Ascending aorta (tissue), 2 donors: ENCODE measurements at regions of chr15 and their contacts with region 1.

Region 1: DNA sequence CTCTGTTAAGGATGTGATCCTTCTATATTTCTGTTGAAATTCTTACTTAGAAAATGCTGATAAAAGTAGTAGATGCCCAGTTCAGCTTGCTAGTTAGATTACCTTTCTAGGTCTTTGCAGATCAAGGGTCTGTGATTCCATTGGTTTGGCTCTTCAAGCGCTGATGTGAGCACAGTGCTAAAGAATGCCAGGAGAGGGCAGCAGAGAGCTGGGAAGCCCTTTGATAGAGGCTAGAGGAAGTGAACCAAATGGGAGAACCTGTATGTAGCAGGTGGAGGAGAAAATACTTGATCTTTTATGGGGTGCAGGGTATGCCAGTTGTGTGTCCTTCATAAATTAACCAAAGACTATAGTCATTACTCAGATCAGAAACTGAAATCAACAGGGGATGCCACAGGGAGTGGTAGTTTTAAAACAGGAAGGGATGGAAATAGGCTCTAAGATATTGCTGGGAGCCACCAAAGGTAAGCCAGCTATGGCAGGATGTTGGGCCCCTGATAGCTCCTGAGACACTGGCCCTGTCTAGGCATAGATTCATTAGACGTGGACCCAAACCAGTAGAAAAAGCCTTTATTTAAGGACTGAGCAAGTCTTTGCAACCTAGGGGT is 677.4 kb downstream of the SQOR start:
- DNase-seq: peak in 1 of 2 donors; percentile 87
- H3K4me3 ChIP-seq: no peak overlapping the region
- H3K27ac ChIP-seq: no peak overlapping the region
- H3K4me1 ChIP-seq: peaks cover 0 to 2% of the 10 kb centered on the region in 2 donors
- H3K27me3 ChIP-seq: no peaks in the 10 kb centered on the region
- CTCF ChIP-seq: peak; percentile 64 to 96 (median 82)

Region 2: GRCh38 chr15:46251903-46252302 is 60.3 kb before region 1 on chr15:
- intact Hi-C with region 1: no loop called
- DNase-seq: no peak
- H3K4me3 ChIP-seq: no peak overlapping the region
- H3K27ac ChIP-seq: no peak overlapping the region
- H3K4me1 ChIP-seq: no peaks in the 10 kb centered on the region
- H3K27me3 ChIP-seq: no peaks in the 10 kb centered on the region
- CTCF ChIP-seq: no peak

Region 3: DNA sequence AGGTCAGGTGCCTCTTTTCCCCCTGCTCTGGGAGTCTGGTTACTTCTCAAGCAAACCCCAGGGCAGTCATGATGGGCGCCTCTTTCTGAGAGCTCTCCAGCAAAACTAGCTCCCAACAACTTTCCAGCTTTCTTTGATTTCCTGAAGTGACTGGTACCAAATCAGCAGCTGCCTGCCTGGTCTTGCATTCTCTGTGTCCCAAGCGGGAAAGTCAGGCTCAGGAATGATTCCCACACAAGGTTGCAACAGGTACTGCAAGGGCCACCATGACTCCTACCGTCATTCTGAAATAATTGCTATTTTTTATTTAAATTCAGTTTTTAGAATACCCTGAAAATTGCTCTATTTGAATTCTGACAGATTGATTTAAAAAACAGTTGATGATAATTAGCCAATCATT is 18.7 kb before region 1 on chr15:
- intact Hi-C with region 1: no loop called
- DNase-seq: no peak
- H3K4me3 ChIP-seq: no peak overlapping the region
- H3K27ac ChIP-seq: no peak overlapping the region
- H3K4me1 ChIP-seq: no peaks in the 10 kb centered on the region
- H3K27me3 ChIP-seq: no peaks in the 10 kb centered on the region
- CTCF ChIP-seq: no peak

Region 4: GRCh38 chr15:46365572-46365971 is 53.3 kb after region 1 on chr15:
- intact Hi-C with region 1: loop called (anchors 5 kb)
- DNase-seq: peak in 1 of 2 donors; percentile 84
- H3K4me3 ChIP-seq: peak overlapping the region; percentile 29 to 51
- H3K27ac ChIP-seq: peak overlapping the region; percentile 76 to 77
- H3K4me1 ChIP-seq: peaks cover 0 to 16% of the 10 kb centered on the region in 2 donors
- H3K27me3 ChIP-seq: no peaks in the 10 kb centered on the region
- CTCF ChIP-seq: no peak

Region 5: DNA sequence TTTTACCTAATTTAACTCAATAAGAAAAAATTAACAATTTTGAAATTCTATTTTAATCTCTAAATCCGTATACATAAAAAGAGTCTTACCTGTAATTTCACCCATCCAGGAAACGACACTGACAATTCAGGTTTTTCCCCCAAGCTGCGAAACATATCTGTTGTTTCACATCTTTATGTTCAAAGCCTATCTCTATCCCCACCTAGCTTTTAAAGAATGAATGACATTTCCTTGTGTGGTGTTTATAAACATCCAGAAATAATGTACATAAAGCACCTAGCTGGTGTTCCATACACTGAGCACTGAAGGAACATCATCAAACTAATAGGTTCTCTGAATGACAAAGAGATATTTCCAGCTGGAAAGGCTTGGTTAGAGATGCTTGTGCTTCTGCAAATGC is 190.4 kb after region 1 on chr15:
- intact Hi-C with region 1: loop called (anchors 1 kb)
- DNase-seq: no peak
- H3K4me3 ChIP-seq: no peak overlapping the region
- H3K27ac ChIP-seq: no peak overlapping the region
- H3K4me1 ChIP-seq: no peaks in the 10 kb centered on the region
- H3K27me3 ChIP-seq: no peaks in the 10 kb centered on the region
- CTCF ChIP-seq: peak in 2 of 3 experiments; percentile 13 to 33

Region 6: GRCh38 chr15:47184003-47184907 is 872.0 kb after region 1 on chr15:
- intact Hi-C with region 1: loop called (anchors 10 kb)
- DNase-seq: no peak
- H3K4me3 ChIP-seq: peak overlapping the region; percentile 52 to 90
- H3K27ac ChIP-seq: peak overlapping the region in 1 of 2 donors; percentile 46
- H3K4me1 ChIP-seq: peaks cover 0 to 3% of the 10 kb centered on the region in 2 donors
- H3K27me3 ChIP-seq: no peaks in the 10 kb centered on the region
- CTCF ChIP-seq: no peak